GM12878 (cell line): ENCODE measurements at regions of chr9 and their contacts with region 1.

Region 1: DNA sequence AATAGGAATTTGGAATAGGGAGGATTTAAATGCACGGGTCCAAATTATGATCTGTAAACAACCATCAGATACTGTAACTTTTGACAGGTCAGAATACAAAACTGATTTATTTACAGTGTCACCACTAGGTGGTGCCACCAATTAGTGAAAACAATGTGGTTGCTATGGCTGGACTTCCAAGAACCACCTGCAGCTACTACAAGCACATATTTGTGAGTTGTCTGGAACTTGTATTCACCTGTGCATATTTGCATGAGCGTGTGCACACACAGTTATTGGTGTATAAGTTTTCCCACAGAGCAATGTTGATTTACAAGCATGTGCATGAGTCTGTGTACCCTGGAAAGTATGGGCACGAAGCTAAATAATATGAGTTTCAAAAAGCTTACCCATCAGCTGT is 3.0 kb upstream of the HRCT1 start:
- DNase-seq: no peak
- ATAC-seq: peak; percentile 84
- H3K4me3 ChIP-seq: no peak overlapping the region
- H3K27ac ChIP-seq: no peak overlapping the region
- H3K4me1 ChIP-seq: no peaks in the 10 kb centered on the region
- H3K27me3 ChIP-seq: peaks cover 0 to 1% of the 10 kb centered on the region in 2 experiments; a peak in 2 of 4 replicates
- CTCF ChIP-seq: peak; percentile 53 to 73 (median 68); a peak in 5 of 6 replicates
- EP300 ChIP-seq: no peak
- POLR2A ChIP-seq: no peak
- RAD21 ChIP-seq: peak; percentile 65

Region 2: DNA sequence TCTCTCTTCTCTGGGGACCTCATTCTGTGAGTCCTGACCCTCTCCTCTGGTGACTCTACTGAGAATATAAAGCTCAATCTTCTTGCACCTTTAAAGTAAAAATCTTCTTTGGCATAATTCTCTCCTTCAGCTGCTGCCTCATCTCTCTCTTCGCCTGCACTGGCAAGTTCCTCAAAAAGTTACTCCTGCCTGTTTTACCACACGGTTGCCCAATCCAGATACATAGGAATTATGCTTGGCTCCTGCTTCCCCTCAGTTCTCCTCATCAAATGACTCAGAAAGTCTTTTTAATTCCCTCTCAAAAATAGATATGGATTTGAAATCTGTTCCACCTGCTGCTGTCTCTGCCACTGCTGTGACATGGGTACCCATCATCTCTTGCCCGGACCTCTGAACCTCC is 11.4 kb before region 1 on chr9:
- CTCF ChIA-PET with region 1: interaction called, 14 read pairs
- POLR2A ChIA-PET with region 1: no interaction called
- RAD21 ChIA-PET with region 1: no interaction called
- SMC1A ChIA-PET with region 1: no interaction called
- in situ Hi-C with region 1: no loop called
- intact Hi-C with region 1: no loop called
- DNase-seq: no peak
- ATAC-seq: no peak
- H3K4me3 ChIP-seq: no peak overlapping the region
- H3K27ac ChIP-seq: no peak overlapping the region
- H3K4me1 ChIP-seq: no peaks in the 10 kb centered on the region
- H3K27me3 ChIP-seq: no peaks in the 10 kb centered on the region
- CTCF ChIP-seq: no peak
- EP300 ChIP-seq: no peak
- POLR2A ChIP-seq: no peak
- RAD21 ChIP-seq: no peak

Region 3: DNA sequence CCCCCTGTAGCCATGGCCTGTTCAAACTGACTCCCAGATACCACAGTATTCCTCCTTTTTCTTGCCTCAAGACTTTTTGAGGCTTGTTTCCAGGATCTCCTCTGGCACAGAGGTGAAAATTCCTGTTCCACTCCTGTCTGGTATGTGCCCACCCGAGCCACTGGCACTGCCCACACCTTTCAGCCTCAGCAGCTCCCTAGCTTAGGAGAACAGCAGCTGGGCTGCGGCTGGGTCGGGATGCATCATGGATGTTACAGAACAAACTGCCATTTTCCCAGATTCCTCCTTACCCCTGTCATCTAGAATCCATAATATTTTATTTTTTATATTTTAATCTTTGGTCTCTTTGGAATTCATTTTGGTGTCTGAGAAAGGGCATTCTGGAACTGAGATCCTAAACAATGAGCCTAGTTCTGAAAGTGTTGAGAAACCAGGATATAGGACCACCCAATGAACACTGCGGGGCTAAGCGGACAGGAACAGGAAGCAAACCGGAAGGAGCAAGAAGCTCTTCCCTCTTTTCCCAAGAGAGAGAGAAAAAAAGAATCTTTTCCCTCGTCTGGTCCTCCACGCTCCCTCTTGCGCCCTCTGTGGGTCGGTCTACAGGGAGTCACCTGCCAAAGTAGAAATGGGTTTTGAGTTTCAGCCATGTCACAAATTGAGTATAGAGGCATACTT is 42.4 kb after region 1 on chr9:
- CTCF ChIA-PET with region 1: interaction called, 41 read pairs
- POLR2A ChIA-PET with region 1: interaction called, 3 read pairs
- RAD21 ChIA-PET with region 1: interaction called, 6 read pairs
- SMC1A ChIA-PET with region 1: interaction called, 9 read pairs
- in situ Hi-C with region 1: no loop called
- intact Hi-C with region 1: loop called (anchors 1 kb)
- DNase-seq: no peak
- ATAC-seq: peak; percentile 84
- H3K4me3 ChIP-seq: no peak overlapping the region
- H3K27ac ChIP-seq: no peak overlapping the region
- H3K4me1 ChIP-seq: no peaks in the 10 kb centered on the region
- H3K27me3 ChIP-seq: no peaks in the 10 kb centered on the region
- CTCF ChIP-seq: peak; percentile 71 to 86 (median 79)
- EP300 ChIP-seq: no peak
- POLR2A ChIP-seq: no peak
- RAD21 ChIP-seq: peak; percentile 63

Region 4: GRCh38 chr9:36023260-36024048 is 120.4 kb after region 1 on chr9:
- CTCF ChIA-PET with region 1: interaction called, 39 read pairs
- POLR2A ChIA-PET with region 1: no interaction called
- RAD21 ChIA-PET with region 1: interaction called, 6 read pairs
- SMC1A ChIA-PET with region 1: interaction called, 4 read pairs
- in situ Hi-C with region 1: no loop called
- intact Hi-C with region 1: loop called (anchors 2 kb)
- DNase-seq: peak; percentile 15
- ATAC-seq: peak; percentile 90
- H3K4me3 ChIP-seq: no peak overlapping the region
- H3K27ac ChIP-seq: no peak overlapping the region
- H3K4me1 ChIP-seq: peaks cover 3% of the 10 kb centered on the region; the same call in 1 of the 2 replicates
- H3K27me3 ChIP-seq: no peaks in the 10 kb centered on the region
- CTCF ChIP-seq: peak; percentile 83 to 85 (median 84)
- EP300 ChIP-seq: no peak
- POLR2A ChIP-seq: no peak
- RAD21 ChIP-seq: peak; percentile 83